ENCODE measurements at regions of chr20 and their contacts with region 1.

Region 1: GRCh38 chr20:53915446-53916172 is 154.8 kb downstream of the BCAS1 start:
- DNase-seq: peak; percentile 86 to 94 (median 91)
- H3K4me3 ChIP-seq: peak overlapping the region; percentile 93
- H3K4me3 Mint-ChIP-seq: peak overlapping the region; percentile 92 to 99 (median 97)
- H3K27ac ChIP-seq: peak overlapping the region; percentile 69
- H3K27ac Mint-ChIP-seq: peak overlapping the region; percentile 81 to 97 (median 94)
- H3K4me1 ChIP-seq: peaks cover 21% of the 10 kb centered on the region
- H3K4me1 Mint-ChIP-seq: peaks cover 17 to 33% (median 31%) of the 10 kb centered on the region in 3 donors
- H3K27me3 ChIP-seq: no peaks in the 10 kb centered on the region
- H3K27me3 Mint-ChIP-seq: no peaks in the 10 kb centered on the region

Region 2: DNA sequence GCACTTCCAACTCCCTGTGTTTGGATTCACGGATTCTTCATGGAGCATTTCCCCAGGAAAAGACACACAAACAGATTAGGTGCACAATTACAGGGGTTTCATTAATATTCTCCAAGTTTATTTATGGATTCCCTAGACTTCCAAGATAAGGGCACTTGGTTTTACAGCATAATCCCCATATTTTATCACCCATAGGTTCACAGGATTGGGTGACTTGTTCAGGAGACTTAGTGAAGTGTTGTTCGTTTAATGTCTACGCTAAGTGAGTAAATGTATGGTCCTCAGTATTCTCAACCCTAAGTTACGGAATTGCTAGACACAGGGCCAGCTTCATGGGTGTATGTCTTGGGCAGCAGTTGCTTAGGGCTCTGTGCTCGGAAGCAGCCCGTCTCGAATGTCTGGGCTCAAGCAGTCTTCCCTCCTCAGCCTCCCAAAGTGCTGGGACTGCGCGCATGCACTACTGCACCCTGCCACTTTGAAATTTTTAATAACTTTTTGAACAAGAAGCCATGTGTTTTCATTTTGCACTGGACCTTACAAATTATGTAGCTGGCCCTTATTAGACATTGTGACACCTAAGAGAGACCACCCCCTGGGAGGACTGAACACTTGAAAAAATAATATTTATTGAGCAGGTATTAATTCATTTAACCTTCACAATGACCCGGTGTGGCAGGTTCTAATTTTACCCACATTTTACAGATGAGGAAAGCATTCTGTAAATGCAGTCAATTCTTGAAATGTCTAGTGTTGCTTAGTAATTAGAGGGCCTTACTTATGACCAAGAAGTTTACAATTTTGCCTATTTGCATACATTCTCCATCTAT is 230.4 kb before region 1 on chr20:
- CTCF ChIA-PET with region 1: interaction called, 11 read pairs
- POLR2A ChIA-PET with region 1: no interaction called
- DNase-seq: no peak
- H3K4me3 ChIP-seq: no peak overlapping the region
- H3K4me3 Mint-ChIP-seq: peak overlapping the region in 2 of 7 donors; percentile 56 to 72
- H3K27ac ChIP-seq: no peak overlapping the region
- H3K27ac Mint-ChIP-seq: peak overlapping the region in 4 of 8 donors; percentile 1 to 89 (median 42)
- H3K4me1 ChIP-seq: peaks cover 10% of the 10 kb centered on the region
- H3K4me1 Mint-ChIP-seq: peaks cover 12 to 18% (median 14%) of the 10 kb centered on the region in 3 donors
- H3K27me3 ChIP-seq: no peaks in the 10 kb centered on the region
- H3K27me3 Mint-ChIP-seq: no peaks in the 10 kb centered on the region

Region 3: DNA sequence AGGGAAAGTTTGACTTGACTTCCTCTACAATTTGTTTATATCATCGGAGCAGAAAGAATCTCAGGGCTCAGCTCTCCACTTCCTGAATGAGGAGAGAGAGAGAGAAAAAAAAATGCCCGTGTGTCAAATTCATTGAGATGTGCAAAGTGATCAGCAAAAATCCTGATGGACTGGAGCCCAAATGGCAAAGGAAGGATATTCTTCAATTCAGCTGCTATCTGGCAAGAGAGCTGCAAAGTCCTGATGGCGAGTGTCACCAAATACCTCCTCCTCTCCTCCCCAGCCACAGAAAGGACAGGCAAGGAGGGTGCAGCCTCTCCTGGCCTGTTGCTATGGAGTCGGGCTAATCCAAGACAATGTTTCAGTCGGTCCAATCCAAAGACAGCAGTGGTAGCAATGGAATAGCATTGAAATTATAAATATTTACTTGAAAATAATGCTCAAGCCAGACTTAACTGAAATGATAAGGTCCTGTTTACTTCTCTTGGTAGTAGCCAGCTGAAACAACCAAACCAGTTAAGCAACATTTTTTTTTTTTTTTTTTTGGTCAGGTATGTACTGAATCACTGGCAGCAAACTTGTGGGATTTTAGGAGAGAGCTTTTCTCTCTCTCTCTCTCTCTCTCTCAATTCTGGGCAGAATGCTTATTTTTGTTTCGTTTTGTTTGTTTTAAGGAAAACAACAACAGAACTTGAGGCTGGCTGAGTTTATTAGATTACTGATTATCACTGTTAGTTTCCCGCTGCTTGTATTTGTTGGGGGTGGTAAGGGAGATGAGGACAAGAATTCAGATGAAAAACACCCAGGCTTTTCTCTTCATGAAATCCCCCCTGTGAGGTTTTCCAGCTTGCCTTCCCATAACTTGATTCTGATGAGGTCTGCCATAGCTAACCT is 49.5 kb before region 1 on chr20:
- CTCF ChIA-PET with region 1: interaction called, 14 read pairs
- POLR2A ChIA-PET with region 1: no interaction called
- DNase-seq: no peak
- H3K4me3 ChIP-seq: peak overlapping the region; percentile 46
- H3K4me3 Mint-ChIP-seq: peak overlapping the region; percentile 4 to 80 (median 68)
- H3K27ac ChIP-seq: no peak overlapping the region
- H3K27ac Mint-ChIP-seq: peak overlapping the region; percentile 70 to 96 (median 90)
- H3K4me1 ChIP-seq: peaks cover 55% of the 10 kb centered on the region
- H3K4me1 Mint-ChIP-seq: peaks cover 45 to 70% (median 67%) of the 10 kb centered on the region in 3 donors
- H3K27me3 ChIP-seq: no peaks in the 10 kb centered on the region
- H3K27me3 Mint-ChIP-seq: no peaks in the 10 kb centered on the region

Region 4: GRCh38 chr20:53899351-53900167 is 16.1 kb before region 1 on chr20:
- CTCF ChIA-PET with region 1: interaction called, 46 read pairs
- POLR2A ChIA-PET with region 1: interaction called, 3 read pairs
- DNase-seq: peak; percentile 27 to 77 (median 65)
- H3K4me3 ChIP-seq: no peak overlapping the region
- H3K4me3 Mint-ChIP-seq: peak overlapping the region in 5 of 7 donors; percentile 15 to 78 (median 22)
- H3K27ac ChIP-seq: no peak overlapping the region
- H3K27ac Mint-ChIP-seq: peak overlapping the region; percentile 52 to 93 (median 74)
- H3K4me1 ChIP-seq: peaks cover 16% of the 10 kb centered on the region
- H3K4me1 Mint-ChIP-seq: peaks cover 28 to 53% (median 51%) of the 10 kb centered on the region in 3 donors
- H3K27me3 ChIP-seq: no peaks in the 10 kb centered on the region
- H3K27me3 Mint-ChIP-seq: peaks cover 0 to 1% of the 10 kb centered on the region in 2 donors

Region 5: DNA sequence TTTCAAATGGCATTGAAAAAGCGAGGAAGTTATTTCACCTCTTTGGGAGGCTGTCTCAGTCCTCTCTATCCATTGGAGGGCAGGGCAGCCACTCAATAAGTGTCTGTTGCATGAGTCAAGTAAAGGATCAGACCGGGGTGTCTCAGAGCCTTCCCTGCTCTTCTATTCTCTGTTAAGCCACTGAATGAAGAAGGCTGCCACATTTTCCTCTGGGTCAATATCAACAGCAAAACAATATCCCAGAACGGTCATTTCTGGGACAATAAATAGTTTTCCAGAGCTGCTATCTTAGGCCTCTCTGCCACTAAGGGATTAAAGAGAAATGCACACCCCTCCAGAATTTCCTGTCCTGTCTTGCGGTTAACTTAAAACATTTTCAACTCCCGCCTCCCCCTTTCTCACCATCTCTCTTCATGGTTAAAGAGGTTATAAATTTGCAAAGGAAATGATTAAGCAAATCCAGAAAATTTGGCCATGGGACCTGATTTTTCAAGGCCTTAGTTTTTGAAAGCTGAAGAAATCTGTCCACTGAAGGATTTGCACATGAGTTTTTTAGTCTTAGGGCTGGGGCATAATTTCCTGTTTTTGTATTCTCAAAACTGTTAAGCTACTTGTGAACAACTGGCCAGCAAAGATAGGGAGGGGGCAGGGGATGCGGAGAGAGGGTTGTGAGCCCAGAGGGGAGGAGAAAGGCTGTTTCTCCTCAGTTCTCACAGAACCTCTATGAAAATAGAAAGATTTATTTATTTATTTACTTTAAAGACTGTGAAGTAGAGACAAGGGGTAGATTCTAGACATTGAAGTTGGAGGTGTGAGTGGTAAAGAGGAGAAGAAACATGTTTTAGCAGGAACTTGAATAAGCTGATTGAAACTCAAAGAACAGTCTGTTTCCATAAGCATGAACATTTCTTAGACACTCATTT is 19.1 kb after region 1 on chr20:
- CTCF ChIA-PET with region 1: interaction called, 20 read pairs
- POLR2A ChIA-PET with region 1: no interaction called
- DNase-seq: peak in 1 of 5 donors; percentile 15
- H3K4me3 ChIP-seq: peak overlapping the region; percentile 18
- H3K4me3 Mint-ChIP-seq: peak overlapping the region; percentile 9 to 86 (median 70)
- H3K27ac ChIP-seq: no peak overlapping the region
- H3K27ac Mint-ChIP-seq: peak overlapping the region; percentile 53 to 96 (median 90)
- H3K4me1 ChIP-seq: peaks cover 27% of the 10 kb centered on the region
- H3K4me1 Mint-ChIP-seq: peaks cover 40 to 62% (median 55%) of the 10 kb centered on the region in 3 donors
- H3K27me3 ChIP-seq: no peaks in the 10 kb centered on the region
- H3K27me3 Mint-ChIP-seq: no peaks in the 10 kb centered on the region

Region 6: DNA sequence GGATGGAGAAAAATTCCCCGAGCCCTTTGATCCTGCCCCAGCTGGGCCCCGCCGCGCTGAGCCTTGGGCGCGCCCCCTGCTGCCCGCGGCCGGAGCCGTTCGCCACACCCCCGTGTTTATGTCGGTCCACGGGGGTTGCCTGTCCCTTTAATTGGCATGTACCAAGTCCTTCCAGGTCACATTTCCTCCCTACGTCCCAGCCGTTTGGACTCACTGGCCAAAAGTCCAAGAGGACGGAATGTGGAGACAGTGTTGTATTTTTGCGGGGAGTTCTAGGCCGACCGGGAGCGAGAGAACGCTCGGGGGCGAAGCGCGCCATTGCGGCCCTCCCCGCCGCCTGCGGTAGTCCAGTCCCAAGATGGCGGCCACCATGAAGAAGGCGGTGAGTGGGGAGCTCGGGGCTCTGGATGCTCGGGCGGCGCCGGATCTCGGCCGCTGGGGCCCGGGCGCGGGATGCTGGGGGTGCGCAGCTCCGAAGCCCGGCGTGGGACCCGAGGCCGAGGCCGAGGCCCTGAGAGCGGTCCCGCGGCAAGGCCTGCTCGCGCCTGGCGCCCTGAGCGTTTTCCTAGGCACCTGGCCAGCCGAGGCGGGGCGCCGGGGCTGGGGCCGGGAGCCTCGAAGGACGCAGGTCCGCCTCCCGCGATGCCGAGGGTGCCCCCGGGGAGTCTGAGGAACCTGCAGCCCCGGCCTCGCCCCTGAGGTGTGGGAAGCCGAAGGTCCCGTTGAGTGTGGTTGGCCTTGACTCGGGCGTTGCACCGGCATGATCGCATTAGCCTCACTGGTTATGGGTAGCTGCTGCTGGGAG is 292.3 kb after region 1 on chr20 and contains the start of gene PFDN4:
- CTCF ChIA-PET with region 1: no interaction called
- POLR2A ChIA-PET with region 1: no interaction called
- DNase-seq: peak; percentile 58 to 83 (median 77)
- H3K4me3 ChIP-seq: peak within 1 kb of the TSS; percentile 91
- H3K4me3 Mint-ChIP-seq: peak within 1 kb of the TSS; percentile 96 to 100 (median 98)
- H3K27ac ChIP-seq: peak within 1 kb of the TSS; percentile 99
- H3K27ac Mint-ChIP-seq: peak within 1 kb of the TSS; percentile 100
- H3K4me1 ChIP-seq: peaks cover 24% of the 10 kb centered on the region
- H3K4me1 Mint-ChIP-seq: peaks cover 29 to 46% (median 41%) of the 10 kb centered on the region in 3 donors
- H3K27me3 ChIP-seq: no peaks in the 10 kb centered on the region
- H3K27me3 Mint-ChIP-seq: peaks cover 5 to 6% of the 10 kb centered on the region in 2 donors
- total RNA-seq, gene PFDN4: 37.1 to 41.3 TPM